ENCODE measurements at regions of chr14 and their contacts with region 1.

Region 1: DNA sequence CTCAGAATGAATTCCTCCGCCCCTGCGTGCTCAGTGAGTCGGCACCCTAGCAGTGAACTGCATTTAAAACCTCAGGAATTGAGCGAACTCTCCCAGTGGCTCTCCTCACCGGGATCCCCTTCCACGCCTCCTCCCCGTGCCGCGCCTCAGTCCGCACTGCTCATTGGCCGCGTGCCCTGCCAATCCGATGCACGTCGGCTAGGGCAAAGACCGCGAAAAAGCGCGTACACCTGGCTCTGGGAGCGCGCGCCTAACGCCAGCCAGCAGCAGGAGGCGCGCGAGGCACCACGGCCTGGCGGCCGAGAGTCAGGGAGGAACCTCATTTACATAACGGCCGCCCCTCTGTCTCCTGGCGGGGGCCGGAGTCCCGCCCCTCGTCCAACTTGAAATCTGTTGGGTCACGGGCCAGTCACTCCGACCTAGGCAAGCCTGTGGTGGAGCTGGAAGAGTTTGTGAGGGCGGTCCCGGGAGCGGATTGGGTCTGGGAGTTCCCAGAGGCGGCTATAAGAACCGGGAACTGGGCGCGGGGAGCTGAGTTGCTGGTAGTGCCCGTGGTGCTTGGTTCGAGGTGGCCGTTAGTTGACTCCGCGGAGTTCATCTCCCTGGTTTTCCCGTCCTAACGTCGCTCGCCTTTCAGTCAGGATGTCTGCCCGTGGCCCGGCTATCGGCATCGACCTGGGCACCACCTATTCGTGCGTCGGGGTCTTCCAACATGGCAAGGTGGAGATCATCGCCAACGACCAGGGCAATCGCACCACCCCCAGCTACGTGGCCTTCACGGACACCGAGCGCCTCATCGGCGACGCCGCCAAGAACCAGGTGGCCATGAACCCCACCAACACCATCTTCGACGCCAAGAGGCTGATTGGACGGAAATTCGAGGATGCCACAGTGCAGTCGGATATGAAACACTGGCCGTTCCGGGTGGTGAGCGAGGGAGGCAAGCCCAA is at the start of gene HSPA2:
- DNase-seq: peak; percentile 100
- ATAC-seq: peak; percentile 90 to 94
- H3K4me3 ChIP-seq: peak within 1 kb of the TSS; percentile 61 to 81 (median 74)
- H3K27ac ChIP-seq: peak within 1 kb of the TSS; percentile 87 to 93 (median 88)
- H3K4me1 ChIP-seq: peaks cover 23 to 39% of the 10 kb centered on the region in 2 donors
- H3K27me3 ChIP-seq: no peaks in the 10 kb centered on the region
- CTCF ChIP-seq: peak; percentile 79 to 87 (median 84)
- POLR2A ChIP-seq: peak; percentile 96 to 100
- total RNA-seq, gene HSPA2: 69.6 to 113 (median 96.4) TPM

Region 2: DNA sequence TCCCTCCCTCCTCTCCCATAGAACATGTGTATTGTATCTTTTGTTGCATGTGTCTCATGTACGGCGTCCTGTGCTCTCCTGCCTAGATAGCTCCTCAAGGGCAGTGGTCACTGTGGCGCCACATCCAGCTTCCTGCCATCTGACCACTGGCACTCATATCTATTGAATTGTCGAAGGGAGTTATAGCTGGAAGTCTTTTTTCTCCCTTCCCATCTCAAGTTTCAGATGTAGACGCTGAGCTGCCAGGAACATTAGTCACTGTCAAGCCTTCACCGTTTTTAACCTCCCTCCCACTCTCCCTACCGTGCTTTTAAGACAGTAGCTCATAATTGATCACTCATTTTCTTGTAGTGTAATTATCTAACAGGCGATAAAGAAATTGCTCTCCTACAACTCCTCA is 119.3 kb before region 1 on chr14:
- in situ Hi-C with region 1: no loop called
- intact Hi-C with region 1: no loop called
- DNase-seq: peak in 1 of 2 donors; percentile 69
- ATAC-seq: peak; percentile 80 to 93
- H3K4me3 ChIP-seq: no peak overlapping the region
- H3K27ac ChIP-seq: peak overlapping the region; percentile 37 to 71 (median 56)
- H3K4me1 ChIP-seq: peaks cover 0 to 4% of the 10 kb centered on the region in 2 donors
- H3K27me3 ChIP-seq: no peaks in the 10 kb centered on the region
- CTCF ChIP-seq: no peak
- POLR2A ChIP-seq: no peak

Region 3: GRCh38 chr14:64569184-64569631 is 28.7 kb after region 1 on chr14:
- in situ Hi-C with region 1: no loop called
- intact Hi-C with region 1: loop called (anchors 1 kb)
- DNase-seq: peak; percentile 70 to 85
- ATAC-seq: peak; percentile 93 to 94
- H3K4me3 ChIP-seq: no peak overlapping the region
- H3K27ac ChIP-seq: peak overlapping the region; percentile 76 to 92 (median 85)
- H3K4me1 ChIP-seq: peaks cover 51 to 65% of the 10 kb centered on the region in 2 donors
- H3K27me3 ChIP-seq: no peaks in the 10 kb centered on the region
- CTCF ChIP-seq: no peak
- POLR2A ChIP-seq: no peak

Region 4: GRCh38 chr14:64574371-64575107 is 34.1 kb after region 1 on chr14:
- in situ Hi-C with region 1: no loop called
- intact Hi-C with region 1: loop called (anchors 1 kb)
- DNase-seq: peak; percentile 49 to 87
- ATAC-seq: peak; percentile 89 to 91
- H3K4me3 ChIP-seq: peak overlapping the region in 2 of 4 donors; percentile 8 to 11
- H3K27ac ChIP-seq: peak overlapping the region; percentile 81 to 92 (median 86)
- H3K4me1 ChIP-seq: peaks cover 36 to 49% of the 10 kb centered on the region in 2 donors
- H3K27me3 ChIP-seq: no peaks in the 10 kb centered on the region
- CTCF ChIP-seq: no peak
- POLR2A ChIP-seq: no peak

Region 5: GRCh38 chr14:64671591-64671990 is 131.1 kb after region 1 on chr14:
- in situ Hi-C with region 1: no loop called
- intact Hi-C with region 1: no loop called
- DNase-seq: no peak
- ATAC-seq: peak; percentile 50 to 54
- H3K4me3 ChIP-seq: no peak overlapping the region
- H3K27ac ChIP-seq: no peak overlapping the region
- H3K4me1 ChIP-seq: peaks cover 0 to 7% of the 10 kb centered on the region in 2 donors
- H3K27me3 ChIP-seq: no peaks in the 10 kb centered on the region
- CTCF ChIP-seq: peak; percentile 33 to 68 (median 54)
- POLR2A ChIP-seq: no peak

Region 6: DNA sequence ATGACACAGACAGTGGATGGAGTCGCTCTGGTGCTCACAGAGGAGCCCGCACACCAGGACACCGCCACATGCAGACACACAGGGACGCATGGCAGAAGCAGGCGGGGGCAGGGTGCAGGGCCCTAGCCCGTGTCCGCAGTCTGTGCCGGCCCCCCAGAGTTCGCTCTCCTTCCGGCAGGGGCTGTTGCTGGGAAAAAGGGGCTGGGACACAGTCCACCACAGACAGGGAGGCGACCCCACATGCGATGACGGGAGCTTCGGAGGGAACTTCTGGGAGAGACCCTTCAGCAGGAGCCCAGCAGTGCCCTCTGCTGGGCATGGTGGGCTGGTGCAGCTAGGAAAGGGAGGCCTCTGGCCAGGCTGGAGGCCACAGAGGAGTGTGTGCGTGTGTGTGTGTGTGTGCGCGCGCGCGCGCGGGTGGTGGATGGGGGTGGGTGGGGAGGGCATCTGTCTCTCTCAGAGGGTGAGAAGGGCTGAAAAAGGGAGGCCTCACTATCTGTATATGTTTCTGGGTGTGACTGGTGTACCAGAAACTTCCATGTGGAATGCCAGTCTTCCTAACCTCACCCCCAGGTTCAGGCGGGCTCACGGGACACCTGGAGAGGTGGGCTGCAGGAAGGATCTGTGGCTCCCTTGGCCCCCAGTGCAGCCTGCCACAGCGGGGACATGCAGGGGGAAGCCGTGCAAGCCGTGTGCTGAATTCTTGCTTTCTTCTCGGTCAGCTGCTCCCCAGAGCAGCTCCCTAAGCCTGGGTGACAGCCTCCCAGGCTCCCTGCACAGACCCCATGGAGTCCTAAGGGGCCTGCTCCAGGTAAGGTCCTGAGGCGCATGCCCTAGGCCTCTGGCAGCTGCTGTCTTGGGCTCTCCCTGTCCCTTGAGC is 224.4 kb after region 1 on chr14:
- in situ Hi-C with region 1: no loop called
- intact Hi-C with region 1: loop called (anchors 10 kb)
- DNase-seq: peak in 1 of 2 donors; percentile 51
- ATAC-seq: peak in 1 of 2 donors; percentile 64
- H3K4me3 ChIP-seq: peak overlapping the region in 3 of 4 donors; percentile 16 to 37 (median 20)
- H3K27ac ChIP-seq: peak overlapping the region; percentile 39 to 74 (median 64)
- H3K4me1 ChIP-seq: peaks cover 16 to 27% of the 10 kb centered on the region in 2 donors
- H3K27me3 ChIP-seq: no peaks in the 10 kb centered on the region
- CTCF ChIP-seq: peak; percentile 74 to 89 (median 85)
- POLR2A ChIP-seq: no peak

Measured in gastrocnemius medialis (tissue), 4 donors.